ENCODE measurements at regions of chr1 and their contacts with region 1.

Region 1: GRCh38 chr1:13664451-13664850 is 35.5 kb upstream of the PRDM2 start:
- DNase-seq: no peak

Region 2: DNA sequence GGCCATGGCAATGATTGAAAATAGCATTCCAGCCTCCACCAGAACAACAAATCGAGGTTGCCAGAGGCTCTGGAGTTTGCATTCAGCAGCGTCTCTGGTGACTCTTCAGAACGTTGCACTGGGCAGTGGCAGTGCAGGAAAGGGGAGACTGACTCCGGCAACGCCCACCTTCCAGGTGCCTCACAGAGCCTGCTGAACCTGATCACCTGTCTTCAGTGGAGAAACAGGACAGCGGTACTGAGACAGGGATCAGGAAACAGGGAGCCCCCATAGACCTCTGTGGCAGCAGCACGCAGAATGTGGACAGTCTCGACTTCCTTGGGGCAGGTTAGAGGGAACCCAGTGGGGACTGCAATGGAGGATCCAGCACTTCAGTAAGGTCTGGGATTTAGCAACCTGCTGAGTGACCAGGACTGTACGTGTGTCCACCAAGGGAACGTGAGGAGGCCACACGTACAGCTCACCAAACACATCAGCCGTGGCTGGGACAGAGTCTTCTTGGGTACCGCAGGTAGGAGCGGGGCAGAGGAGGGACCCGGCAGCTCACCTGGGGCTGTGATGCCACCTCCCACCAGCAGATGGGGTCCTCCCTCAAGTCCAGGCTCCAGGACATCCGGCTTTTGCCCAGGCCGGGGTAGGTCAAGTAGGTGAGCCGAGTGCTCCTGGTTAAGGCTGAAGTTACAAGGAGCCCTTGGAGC is 164.2 kb after region 1 on chr1:
- intact Hi-C with region 1: loop called (anchors 5 kb)
- DNase-seq: no peak

Region 3: DNA sequence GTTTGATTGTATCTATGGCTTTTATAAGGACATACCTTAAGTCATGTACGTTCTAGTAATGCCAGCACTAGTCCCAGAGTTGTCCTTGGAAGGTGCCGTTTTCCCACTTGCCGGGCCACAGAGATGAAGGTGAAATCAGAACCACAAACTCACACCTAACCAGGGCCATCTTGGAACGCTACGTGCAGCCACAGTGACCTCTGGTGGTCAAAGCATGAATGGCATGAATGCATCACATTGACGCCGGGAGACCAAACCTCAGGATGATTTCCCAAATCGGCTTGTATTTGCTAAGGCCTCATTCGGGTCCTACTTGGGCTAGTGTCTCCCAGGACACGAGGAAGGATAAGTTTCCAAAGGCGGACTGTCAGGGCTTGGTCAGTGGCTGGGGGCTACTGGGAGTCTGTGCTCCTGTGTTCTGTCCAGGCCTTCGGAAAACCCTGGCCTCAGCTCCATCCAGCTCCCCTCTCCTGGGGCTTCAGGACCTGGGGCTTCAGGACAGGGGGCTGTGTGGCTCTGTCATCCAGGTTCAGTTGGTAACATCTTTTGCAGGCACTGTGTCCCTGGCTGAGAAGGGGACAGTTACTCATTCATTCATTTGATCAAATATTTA is 296.0 kb after region 1 on chr1:
- intact Hi-C with region 1: loop called (anchors 1 kb)
- DNase-seq: peak; percentile 81

Measured in cardiac septum (tissue), 1 donor.